ENCODE measurements at regions of chr3 and their contacts with region 1.

Region 1: GRCh38 chr3:45593708-45594609 is 592 bp upstream of the LIMD1 start:
- DNase-seq: peak; percentile 52 to 64
- ATAC-seq: peak; percentile 41 to 49
- H3K4me3 ChIP-seq: peak overlapping the region; percentile 61 to 92 (median 72)
- H3K27ac ChIP-seq: peak overlapping the region; percentile 90 to 99 (median 95)
- H3K4me1 ChIP-seq: peaks cover 42 to 59% of the 10 kb centered on the region in 2 donors
- H3K27me3 ChIP-seq: no peaks in the 10 kb centered on the region
- CTCF ChIP-seq: no peak
- POLR2A ChIP-seq: peak; percentile 78 to 79

Region 2: GRCh38 chr3:45507820-45508317 is 86.1 kb before region 1 on chr3:
- in situ Hi-C with region 1: loop called in 2 of 4 experiments (anchors 10 kb)
- intact Hi-C with region 1: loop called (anchors 2 kb)
- DNase-seq: peak in 1 of 2 donors; percentile 30
- ATAC-seq: peak in 1 of 2 donors; percentile 34
- H3K4me3 ChIP-seq: no peak overlapping the region
- H3K27ac ChIP-seq: peak overlapping the region in 2 of 4 donors; percentile 8 to 13
- H3K4me1 ChIP-seq: no peaks in the 10 kb centered on the region
- H3K27me3 ChIP-seq: no peaks in the 10 kb centered on the region
- CTCF ChIP-seq: peak in 4 of 5 experiments; percentile 3 to 46 (median 20)
- POLR2A ChIP-seq: no peak

Region 3: GRCh38 chr3:45553996-45554666 is 39.8 kb before region 1 on chr3:
- in situ Hi-C with region 1: loop called in 1 of 4 experiments (anchors 5 kb)
- intact Hi-C with region 1: loop called (anchors 2 kb)
- DNase-seq: peak; percentile 86 to 93
- ATAC-seq: peak; percentile 48 to 55
- H3K4me3 ChIP-seq: no peak overlapping the region
- H3K27ac ChIP-seq: peak overlapping the region; percentile 85 to 90 (median 87)
- H3K4me1 ChIP-seq: peaks cover 87 to 88% of the 10 kb centered on the region in 2 donors
- H3K27me3 ChIP-seq: no peaks in the 10 kb centered on the region
- CTCF ChIP-seq: no peak
- POLR2A ChIP-seq: no peak

Region 4: GRCh38 chr3:45607790-45608189 is 13.8 kb after region 1 on chr3:
- in situ Hi-C with region 1: no loop called
- intact Hi-C with region 1: loop called (anchors 1 kb)
- DNase-seq: no peak
- ATAC-seq: peak in 1 of 2 donors; percentile 23
- H3K4me3 ChIP-seq: peak overlapping the region in 1 of 4 donors; percentile 6
- H3K27ac ChIP-seq: peak overlapping the region; percentile 75 to 86 (median 81)
- H3K4me1 ChIP-seq: peaks cover 90 to 96% of the 10 kb centered on the region in 2 donors
- H3K27me3 ChIP-seq: no peaks in the 10 kb centered on the region
- CTCF ChIP-seq: no peak
- POLR2A ChIP-seq: no peak

Region 5: DNA sequence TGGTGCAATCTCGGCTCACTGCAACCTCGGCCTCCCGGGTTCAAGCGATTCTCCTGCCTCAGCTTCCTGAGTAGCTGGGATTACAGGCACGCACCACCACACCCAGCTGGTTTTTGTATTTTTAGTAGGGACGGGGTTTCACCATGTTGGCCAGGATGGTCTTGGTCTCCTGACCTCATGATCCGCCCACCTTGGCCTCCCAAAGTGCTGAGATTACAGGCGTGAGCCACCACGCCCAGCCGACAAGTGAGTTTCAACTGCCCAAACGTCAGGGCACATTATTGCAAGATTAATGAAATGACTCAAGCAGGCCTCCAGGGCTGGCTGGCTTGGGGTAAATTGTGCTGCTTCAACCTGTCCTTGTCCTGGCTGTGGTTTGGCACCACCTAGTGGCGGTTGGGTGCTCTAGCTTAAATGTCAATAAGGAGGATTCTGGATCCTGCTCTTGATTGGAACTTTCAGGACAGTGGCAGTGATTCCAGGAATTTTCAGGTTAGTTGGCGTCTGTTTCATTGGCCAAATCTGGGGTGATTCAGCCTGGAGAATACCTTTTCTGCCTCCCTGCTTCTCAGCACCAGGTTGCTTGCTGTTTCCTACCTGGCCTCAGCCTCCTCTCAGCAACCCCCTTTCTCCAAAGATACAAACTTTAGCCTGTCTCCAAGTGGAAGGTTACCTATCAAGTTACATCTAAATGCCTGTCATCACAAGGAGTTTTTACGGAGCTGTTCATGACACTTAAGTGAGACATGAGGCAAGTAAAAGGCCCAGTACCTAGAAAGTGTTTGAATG is 62.8 kb after region 1 on chr3:
- in situ Hi-C with region 1: loop called in 2 of 4 experiments (anchors 5 to 10 kb)
- intact Hi-C with region 1: loop called (anchors 1 kb)
- DNase-seq: peak; percentile 85 to 95
- ATAC-seq: peak; percentile 78 to 82
- H3K4me3 ChIP-seq: no peak overlapping the region
- H3K27ac ChIP-seq: peak overlapping the region; percentile 71 to 82 (median 78)
- H3K4me1 ChIP-seq: peaks cover 44 to 48% of the 10 kb centered on the region in 2 donors
- H3K27me3 ChIP-seq: no peaks in the 10 kb centered on the region
- CTCF ChIP-seq: peak; percentile 96 to 97 (median 97)
- POLR2A ChIP-seq: no peak

Region 6: GRCh38 chr3:45817831-45818522 is 224.0 kb after region 1 on chr3:
- in situ Hi-C with region 1: no loop called
- intact Hi-C with region 1: loop called (anchors 5 kb)
- DNase-seq: peak; percentile 82 to 89
- ATAC-seq: peak; percentile 77 to 81
- H3K4me3 ChIP-seq: no peak overlapping the region
- H3K27ac ChIP-seq: peak overlapping the region; percentile 82 to 96 (median 88)
- H3K4me1 ChIP-seq: peaks cover 41 to 66% of the 10 kb centered on the region in 2 donors
- H3K27me3 ChIP-seq: no peaks in the 10 kb centered on the region
- CTCF ChIP-seq: no peak
- POLR2A ChIP-seq: peak in 1 of 2 donors; percentile 13